Transverse colon (tissue), 4 donors: ENCODE measurements at regions of chr7 and their contacts with region 1.

Region 1: DNA sequence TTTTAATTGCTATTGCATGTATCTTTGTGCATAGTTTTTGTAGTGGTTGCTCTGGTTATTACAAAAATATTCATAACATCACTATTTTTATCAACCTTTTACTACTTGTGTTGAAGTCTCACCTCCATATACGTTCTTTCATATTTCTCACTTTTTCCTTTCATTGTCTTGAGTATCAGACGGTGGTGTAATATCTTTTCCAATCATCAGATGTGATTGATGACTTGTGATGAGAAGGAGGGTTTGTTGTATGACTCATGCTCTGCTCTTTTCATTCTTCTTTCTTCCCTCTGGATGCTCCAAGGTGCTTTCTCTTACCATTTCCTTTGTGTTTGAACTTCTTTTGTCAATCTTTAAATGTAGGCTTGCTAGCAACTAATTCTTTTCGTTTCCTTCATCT is 310.2 kb downstream of the TNS3 start:
- DNase-seq: no peak
- H3K4me3 ChIP-seq: no peak overlapping the region
- H3K27ac ChIP-seq: no peak overlapping the region
- H3K4me1 ChIP-seq: peaks cover 0 to under 1% (median 0%) of the 10 kb centered on the region in 4 donors
- H3K27me3 ChIP-seq: no peaks in the 10 kb centered on the region
- CTCF ChIP-seq: no peak
- EP300 ChIP-seq: no peak
- POLR2A ChIP-seq: no peak

Region 2: GRCh38 chr7:47211519-47211973 is 60.2 kb before region 1 on chr7:
- in situ Hi-C with region 1: no loop called
- intact Hi-C with region 1: loop called (anchors 2 kb)
- DNase-seq: no peak
- H3K4me3 ChIP-seq: no peak overlapping the region
- H3K27ac ChIP-seq: no peak overlapping the region
- H3K4me1 ChIP-seq: peaks cover 0 to 13% (median 4%) of the 10 kb centered on the region in 4 donors
- H3K27me3 ChIP-seq: no peaks in the 10 kb centered on the region
- CTCF ChIP-seq: no peak
- EP300 ChIP-seq: no peak
- POLR2A ChIP-seq: no peak